ENCODE measurements at regions of chr4 and their contacts with region 1.

Region 1: GRCh38 chr4:110310795-110311194 is 112.4 kb upstream of the ELOVL6 start:
- DNase-seq: peak; percentile 17
- ATAC-seq: peak; percentile 88
- H3K4me3 ChIP-seq: no peak overlapping the region
- H3K27ac ChIP-seq: no peak overlapping the region
- H3K4me1 ChIP-seq: no peaks in the 10 kb centered on the region
- H3K27me3 ChIP-seq: no peaks in the 10 kb centered on the region
- CTCF ChIP-seq: no peak
- EP300 ChIP-seq: no peak
- POLR2A ChIP-seq: no peak
- RAD21 ChIP-seq: no peak

Region 2: GRCh38 chr4:110296892-110297291 is 13.9 kb before region 1 on chr4:
- CTCF ChIA-PET with region 1: interaction called, 14 read pairs
- POLR2A ChIA-PET with region 1: no interaction called
- RAD21 ChIA-PET with region 1: interaction called, 3 read pairs
- SMC1A ChIA-PET with region 1: interaction called, 16 read pairs
- in situ Hi-C with region 1: no loop called
- intact Hi-C with region 1: no loop called
- DNase-seq: peak; percentile 38
- ATAC-seq: peak; percentile 97
- H3K4me3 ChIP-seq: no peak overlapping the region
- H3K27ac ChIP-seq: no peak overlapping the region
- H3K4me1 ChIP-seq: peaks cover 9% of the 10 kb centered on the region
- H3K27me3 ChIP-seq: peaks cover 0 to 4% of the 10 kb centered on the region in 2 experiments; a peak in 1 of 4 replicates
- CTCF ChIP-seq: no peak
- EP300 ChIP-seq: peak; percentile 54 to 75; a peak in 3 of 4 replicates
- POLR2A ChIP-seq: no peak
- RAD21 ChIP-seq: no peak

Region 3: DNA sequence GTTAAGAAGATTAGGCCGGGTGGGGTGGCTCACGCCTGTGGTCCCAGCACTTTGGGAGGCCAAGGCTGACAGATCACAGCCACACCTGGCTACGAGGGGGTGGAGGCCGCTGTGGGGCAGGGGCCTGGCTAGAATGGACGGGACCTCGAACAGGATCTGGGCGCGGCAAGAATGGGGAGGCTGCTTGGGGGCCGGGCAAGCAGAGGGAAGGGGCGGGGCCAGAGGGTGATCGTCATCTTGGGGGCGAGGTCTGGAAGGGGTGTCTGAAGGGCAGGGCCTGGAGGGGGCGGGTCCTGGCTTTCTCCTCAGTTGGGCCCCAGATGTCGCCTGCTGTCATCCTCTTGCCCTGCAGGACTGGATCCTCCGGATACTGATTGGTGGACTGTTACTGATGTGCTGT is 107.8 kb after region 1 on chr4:
- CTCF ChIA-PET with region 1: no interaction called
- POLR2A ChIA-PET with region 1: no interaction called
- RAD21 ChIA-PET with region 1: no interaction called
- SMC1A ChIA-PET with region 1: no interaction called
- in situ Hi-C with region 1: no loop called
- intact Hi-C with region 1: no loop called
- DNase-seq: no peak
- ATAC-seq: no peak
- H3K4me3 ChIP-seq: no peak overlapping the region
- H3K27ac ChIP-seq: no peak overlapping the region
- H3K4me1 ChIP-seq: no peaks in the 10 kb centered on the region
- H3K27me3 ChIP-seq: no peaks in the 10 kb centered on the region
- CTCF ChIP-seq: no peak
- EP300 ChIP-seq: no peak
- POLR2A ChIP-seq: no peak
- RAD21 ChIP-seq: no peak

Measured in GM12878 (cell line).